MCF 10A (cell line): ENCODE measurements at regions of chr1 and their contacts with region 1.

Region 1: GRCh38 chr1:180631766-180632325 is at the start of gene XPR1:
- DNase-seq: peak; percentile 100
- H3K4me3 Mint-ChIP-seq: no peak within 1 kb of the TSS
- H3K27ac Mint-ChIP-seq: no peak within 1 kb of the TSS
- H3K4me1 Mint-ChIP-seq: peaks cover 11% of the 10 kb centered on the region
- H3K27me3 Mint-ChIP-seq: no peaks in the 10 kb centered on the region
- CTCF ChIP-seq: no peak
- total RNA-seq, gene XPR1: 38.6 and 39.7 TPM in 2 replicates

Region 2: GRCh38 chr1:180515864-180516388 is 115.9 kb before region 1 on chr1:
- CTCF ChIA-PET with region 1: interaction called, 44 read pairs
- POLR2A ChIA-PET with region 1: interaction called, 51 read pairs
- intact Hi-C with region 1: loop called (anchors 1 kb)
- DNase-seq: peak; percentile 95
- H3K4me3 Mint-ChIP-seq: no peak overlapping the region
- H3K27ac Mint-ChIP-seq: peak overlapping the region; percentile 91
- H3K4me1 Mint-ChIP-seq: peaks cover 7% of the 10 kb centered on the region
- H3K27me3 Mint-ChIP-seq: no peaks in the 10 kb centered on the region
- CTCF ChIP-seq: peak; percentile 98

Region 3: DNA sequence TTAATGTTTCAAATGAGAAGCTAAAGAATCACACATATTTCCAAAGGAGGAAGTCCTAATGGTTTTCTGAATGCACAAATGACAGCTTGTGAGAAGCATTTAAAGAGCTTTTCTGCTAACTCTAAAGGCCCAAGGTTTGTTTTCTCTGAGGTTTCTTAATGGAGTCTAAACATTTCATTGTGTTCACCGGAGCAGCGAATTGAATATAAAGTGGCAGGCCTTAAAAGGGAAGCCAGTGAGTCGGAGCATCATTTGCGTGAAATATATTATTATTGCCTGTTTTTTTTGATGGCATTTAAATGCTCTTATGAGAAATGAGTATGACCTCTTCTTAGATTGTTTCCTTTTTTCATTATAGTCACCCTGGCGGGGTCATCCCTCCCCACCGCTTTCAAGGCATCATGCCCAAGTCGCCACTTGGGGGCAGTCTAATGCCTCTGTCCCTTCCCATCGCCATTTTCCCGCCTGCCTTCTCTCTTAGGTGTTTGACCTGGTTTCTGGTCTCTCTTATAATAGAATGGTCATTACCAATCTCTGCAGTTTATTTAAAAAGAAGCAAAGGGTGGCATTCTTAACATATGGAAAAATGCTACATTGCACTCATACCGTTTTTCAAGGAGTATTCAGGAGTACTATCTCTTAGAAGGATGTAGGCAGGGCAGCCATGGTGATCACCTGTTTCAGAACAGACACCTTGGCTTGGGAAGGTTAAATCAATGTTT is 98.4 kb before region 1 on chr1:
- CTCF ChIA-PET with region 1: interaction called, 9 read pairs
- POLR2A ChIA-PET with region 1: interaction called, 35 read pairs
- intact Hi-C with region 1: loop called (anchors 1 kb)
- DNase-seq: peak; percentile 88
- H3K4me3 Mint-ChIP-seq: no peak overlapping the region
- H3K27ac Mint-ChIP-seq: no peak overlapping the region
- H3K4me1 Mint-ChIP-seq: peaks cover 43% of the 10 kb centered on the region
- H3K27me3 Mint-ChIP-seq: no peaks in the 10 kb centered on the region
- CTCF ChIP-seq: peak; percentile 90

Region 4: DNA sequence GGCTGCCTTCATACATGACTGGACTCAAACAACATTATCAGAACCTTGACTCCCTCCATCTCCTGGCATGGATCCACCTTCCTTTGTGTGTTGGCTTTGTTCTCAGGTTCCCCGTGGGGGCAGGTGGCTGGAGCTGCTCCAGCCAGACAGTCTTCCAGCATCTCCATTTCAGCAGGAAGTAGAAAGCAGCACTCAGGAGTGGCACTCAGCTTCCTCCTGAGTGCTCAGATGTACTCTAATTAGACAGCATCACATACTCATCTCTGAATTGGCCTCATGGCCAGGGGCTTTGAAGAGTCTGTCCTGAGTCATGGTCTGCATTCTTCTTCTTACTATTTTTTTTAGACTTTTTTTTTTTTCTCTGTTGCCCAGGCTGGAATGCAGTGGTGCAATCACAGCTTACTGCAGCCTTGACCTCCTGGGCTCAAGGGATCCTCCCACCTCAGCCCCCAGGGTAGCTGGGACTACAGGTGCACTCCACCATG is 45.1 kb before region 1 on chr1:
- CTCF ChIA-PET with region 1: interaction called, 12 read pairs
- POLR2A ChIA-PET with region 1: interaction called, 33 read pairs
- intact Hi-C with region 1: no loop called
- DNase-seq: peak; percentile 93
- H3K4me3 Mint-ChIP-seq: no peak overlapping the region
- H3K27ac Mint-ChIP-seq: peak overlapping the region; percentile 99
- H3K4me1 Mint-ChIP-seq: peaks cover 34% of the 10 kb centered on the region
- H3K27me3 Mint-ChIP-seq: no peaks in the 10 kb centered on the region
- CTCF ChIP-seq: no peak

Region 5: DNA sequence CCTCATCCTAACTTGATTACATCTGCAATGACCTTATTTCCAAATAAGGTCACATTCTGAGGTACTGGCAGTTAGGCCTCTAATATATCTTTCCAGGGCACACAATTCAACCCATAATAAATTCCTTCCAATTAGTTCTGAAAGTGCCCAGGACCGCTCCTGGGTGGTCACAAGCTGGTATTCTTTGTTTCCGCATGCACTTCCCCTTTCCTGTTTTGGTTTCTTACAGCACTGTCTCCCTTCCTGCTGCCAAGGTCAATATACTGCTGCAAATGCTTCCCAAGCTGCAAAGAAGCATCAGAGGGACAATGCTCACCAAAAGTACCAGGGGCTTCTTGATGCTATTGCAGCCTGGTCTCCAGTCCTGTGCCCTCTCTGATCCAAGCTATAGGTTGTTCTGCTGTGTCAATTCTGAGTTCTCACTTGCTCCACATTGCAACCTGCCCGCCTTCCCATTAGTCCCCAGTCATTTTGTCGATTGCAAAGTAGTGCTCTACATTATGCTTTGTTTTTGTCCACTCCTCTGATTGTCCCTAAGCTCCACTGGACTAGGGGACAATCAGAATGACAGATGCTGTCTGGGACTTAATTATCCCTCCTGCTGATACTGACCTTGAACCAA is 14.0 kb before region 1 on chr1:
- CTCF ChIA-PET with region 1: interaction called, 14 read pairs
- POLR2A ChIA-PET with region 1: interaction called, 14 read pairs
- intact Hi-C with region 1: no loop called
- DNase-seq: no peak
- H3K4me3 Mint-ChIP-seq: no peak overlapping the region
- H3K27ac Mint-ChIP-seq: no peak overlapping the region
- H3K4me1 Mint-ChIP-seq: no peaks in the 10 kb centered on the region
- H3K27me3 Mint-ChIP-seq: no peaks in the 10 kb centered on the region
- CTCF ChIP-seq: no peak

Region 6: GRCh38 chr1:181166377-181167196 is 534.7 kb after region 1 on chr1:
- CTCF ChIA-PET with region 1: interaction called, 3 read pairs
- POLR2A ChIA-PET with region 1: no interaction called
- intact Hi-C with region 1: loop called (anchors 1 kb)
- DNase-seq: peak; percentile 90
- H3K4me3 Mint-ChIP-seq: no peak overlapping the region
- H3K27ac Mint-ChIP-seq: no peak overlapping the region
- H3K4me1 Mint-ChIP-seq: no peaks in the 10 kb centered on the region
- H3K27me3 Mint-ChIP-seq: no peaks in the 10 kb centered on the region
- CTCF ChIP-seq: peak; percentile 97